ENCODE measurements at regions of chr6 and their contacts with region 1.

Region 1: GRCh38 chr6:4021133-4021853 is 57.6 kb downstream of the FAM217A start:
- DNase-seq: peak; percentile 95
- ATAC-seq: peak; percentile 77
- H3K4me3 ChIP-seq: peak overlapping the region; percentile 86 to 95
- H3K27ac ChIP-seq: peak overlapping the region; percentile 93
- H3K4me1 ChIP-seq: peaks cover 17 to 31% of the 10 kb centered on the region in 2 experiments
- H3K27me3 ChIP-seq: no peaks in the 10 kb centered on the region
- CTCF ChIP-seq: peak; percentile 8 to 18 (median 13); a peak in 2 of 6 replicates
- POLR2A ChIP-seq: peak; percentile 94
- RAD21 ChIP-seq: 0 out of 2 replicates have a peak, but pooled peaks have one; percentile 10

Region 2: DNA sequence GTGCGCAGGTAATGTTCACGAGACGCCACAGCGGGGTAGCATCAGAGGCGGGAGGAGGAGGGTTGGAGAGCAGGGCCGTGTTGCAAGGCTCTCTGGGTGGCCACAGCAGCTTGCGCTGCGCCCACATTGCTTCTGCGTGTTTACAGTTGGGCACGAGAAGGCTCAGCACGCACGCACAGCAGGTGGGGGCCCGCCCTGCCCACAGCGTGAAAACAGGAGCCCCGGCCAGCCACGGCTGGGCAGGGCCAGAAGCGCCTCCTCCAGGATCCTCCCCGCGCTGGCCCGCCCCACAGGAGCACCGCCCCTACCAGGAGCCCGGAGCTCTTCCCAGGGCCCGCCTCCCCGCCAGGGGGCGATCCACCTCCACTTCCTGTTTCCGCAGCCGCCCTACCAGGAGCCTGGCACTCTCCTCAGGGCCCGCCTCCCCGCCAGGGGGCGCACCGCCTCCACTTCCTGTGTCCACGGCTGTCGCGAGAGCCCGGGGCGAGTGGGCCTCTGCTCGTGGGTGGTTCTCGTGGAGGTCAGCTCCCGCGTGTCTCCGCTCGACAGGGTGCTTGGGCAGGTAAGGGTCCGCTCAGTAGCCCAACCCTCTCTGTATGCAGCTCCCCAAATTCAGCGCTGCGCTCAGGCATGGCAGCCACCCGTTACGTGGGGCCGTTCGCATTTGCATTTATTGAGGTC is 172.2 kb before region 1 on chr6 and contains the start of gene FAM50B:
- CTCF ChIA-PET with region 1: no interaction called
- POLR2A ChIA-PET with region 1: no interaction called
- RAD21 ChIA-PET with region 1: no interaction called
- intact Hi-C with region 1: no loop called
- DNase-seq: no peak
- ATAC-seq: peak; percentile 99
- H3K4me3 ChIP-seq: no peak within 1 kb of the TSS
- H3K27ac ChIP-seq: no peak within 1 kb of the TSS
- H3K4me1 ChIP-seq: no peaks in the 10 kb centered on the region; a peak in 1 of 4 replicates
- H3K27me3 ChIP-seq: no peaks in the 10 kb centered on the region
- CTCF ChIP-seq: peak; percentile 45 to 64 (median 54); a peak in 5 of 6 replicates
- POLR2A ChIP-seq: no peak
- RAD21 ChIP-seq: peak; percentile 32; the same call in 1 of the 2 replicates
- total RNA-seq, gene FAM50B: 0.86 TPM

Region 3: DNA sequence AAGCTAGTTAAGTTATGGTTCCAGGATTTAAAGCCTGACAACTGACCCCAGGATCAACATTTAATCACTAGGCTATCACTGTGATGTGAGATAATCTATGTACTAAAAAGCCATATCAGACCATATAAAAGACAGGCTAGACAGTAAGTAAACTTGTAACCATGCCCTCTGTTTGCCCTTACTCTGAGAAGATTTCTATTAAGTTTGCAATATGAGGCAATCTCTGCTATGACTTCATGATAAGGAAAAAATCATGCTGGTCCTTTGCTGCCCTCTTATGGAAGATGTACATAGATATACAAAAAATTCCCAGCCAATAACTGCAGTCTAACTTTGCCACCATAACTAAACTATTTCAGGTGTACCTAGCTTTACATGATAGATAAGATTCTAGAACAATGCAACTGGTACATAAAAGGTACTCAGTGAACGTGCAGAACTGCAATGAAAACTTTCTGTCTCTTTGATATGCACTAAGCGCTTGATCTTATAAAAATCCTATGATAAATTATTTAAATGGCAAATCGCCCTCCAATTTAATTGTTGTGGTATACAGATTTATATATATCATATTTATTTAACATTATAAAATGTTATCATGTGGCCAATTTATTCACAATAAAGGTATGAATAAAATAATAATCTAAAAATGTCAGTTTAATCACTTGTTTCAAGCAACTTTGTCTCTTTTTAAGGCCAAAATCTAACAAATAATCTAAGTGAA is 12.8 kb before region 1 on chr6:
- CTCF ChIA-PET with region 1: interaction called, 10 read pairs
- POLR2A ChIA-PET with region 1: interaction called, 6 read pairs
- RAD21 ChIA-PET with region 1: no interaction called
- intact Hi-C with region 1: no loop called
- DNase-seq: peak; percentile 56
- ATAC-seq: peak; percentile 80
- H3K4me3 ChIP-seq: no peak overlapping the region
- H3K27ac ChIP-seq: no peak overlapping the region
- H3K4me1 ChIP-seq: peaks cover 0 to 9% of the 10 kb centered on the region in 2 experiments; a peak in 2 of 4 replicates
- H3K27me3 ChIP-seq: no peaks in the 10 kb centered on the region
- CTCF ChIP-seq: peak; percentile 44 to 62 (median 54); a peak in 4 of 6 replicates
- POLR2A ChIP-seq: no peak
- RAD21 ChIP-seq: peak; percentile 73

Region 4: DNA sequence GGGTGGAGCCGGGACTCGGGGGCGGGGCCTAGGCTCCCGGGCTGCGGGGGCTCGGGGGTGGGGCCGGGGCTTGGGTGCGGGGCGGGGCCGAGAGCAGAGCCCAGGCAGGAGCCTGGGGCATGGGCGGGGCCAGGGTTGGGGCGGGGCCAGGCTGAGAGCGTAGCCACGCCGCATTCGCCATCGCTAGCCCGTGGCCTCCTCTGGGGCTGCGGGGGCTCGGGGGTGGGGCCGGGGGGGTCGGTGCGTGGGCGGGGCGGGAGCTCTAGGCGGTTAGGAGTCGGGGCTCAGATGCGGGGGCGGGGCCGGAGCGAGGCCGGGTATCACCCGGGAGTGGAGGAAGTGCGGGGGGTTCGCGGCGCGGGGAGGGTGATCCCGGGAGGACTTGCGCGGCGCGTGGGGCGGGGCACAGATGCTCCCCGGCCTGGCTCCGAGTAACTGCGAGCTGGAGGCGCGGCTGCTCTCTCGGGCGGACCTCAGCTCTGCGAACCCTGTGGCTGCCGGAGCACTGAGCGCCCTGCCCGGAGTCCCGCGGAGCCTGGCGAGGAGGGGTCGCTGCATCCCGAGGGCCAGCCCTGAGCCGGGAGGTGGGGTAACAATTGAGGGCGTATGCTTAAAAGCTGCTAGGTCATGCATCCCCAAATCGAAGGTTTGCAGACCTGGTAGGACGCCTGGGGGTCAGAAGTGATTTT is 114.5 kb after region 1 on chr6:
- CTCF ChIA-PET with region 1: no interaction called
- POLR2A ChIA-PET with region 1: interaction called, 23 read pairs
- RAD21 ChIA-PET with region 1: no interaction called
- intact Hi-C with region 1: no loop called
- DNase-seq: peak; percentile 78
- ATAC-seq: peak; percentile 90
- H3K4me3 ChIP-seq: peak overlapping the region; percentile 62 to 66
- H3K27ac ChIP-seq: peak overlapping the region; percentile 64
- H3K4me1 ChIP-seq: peaks cover 10 to 16% of the 10 kb centered on the region in 2 experiments; a peak in 3 of 4 replicates
- H3K27me3 ChIP-seq: no peaks in the 10 kb centered on the region
- CTCF ChIP-seq: no peak
- POLR2A ChIP-seq: peak; percentile 9
- RAD21 ChIP-seq: no peak

Measured in HCT116 (cell line).